Esophagus muscularis mucosa (tissue), 4 donors: ENCODE measurements at regions of chr14 and their contacts with region 1.

Region 1: GRCh38 chr14:37874429-37875191 is 279.2 kb downstream of the TTC6 start:
- DNase-seq: peak; percentile 95
- H3K4me3 ChIP-seq: no peak overlapping the region
- H3K27ac ChIP-seq: no peak overlapping the region
- H3K4me1 ChIP-seq: peaks cover 0 to 6% (median 3%) of the 10 kb centered on the region in 4 donors
- H3K27me3 ChIP-seq: no peaks in the 10 kb centered on the region
- CTCF ChIP-seq: peak; percentile 69 to 88 (median 86)
- EP300 ChIP-seq: no peak
- POLR2A ChIP-seq: no peak

Region 2: GRCh38 chr14:37246427-37246914 is 628.1 kb before region 1 on chr14:
- intact Hi-C with region 1: loop called (anchors 5 kb)
- DNase-seq: no peak
- H3K4me3 ChIP-seq: no peak overlapping the region
- H3K27ac ChIP-seq: no peak overlapping the region
- H3K4me1 ChIP-seq: no peaks in the 10 kb centered on the region
- H3K27me3 ChIP-seq: no peaks in the 10 kb centered on the region
- CTCF ChIP-seq: peak; percentile 64 to 84 (median 74)
- EP300 ChIP-seq: no peak
- POLR2A ChIP-seq: no peak

Region 3: DNA sequence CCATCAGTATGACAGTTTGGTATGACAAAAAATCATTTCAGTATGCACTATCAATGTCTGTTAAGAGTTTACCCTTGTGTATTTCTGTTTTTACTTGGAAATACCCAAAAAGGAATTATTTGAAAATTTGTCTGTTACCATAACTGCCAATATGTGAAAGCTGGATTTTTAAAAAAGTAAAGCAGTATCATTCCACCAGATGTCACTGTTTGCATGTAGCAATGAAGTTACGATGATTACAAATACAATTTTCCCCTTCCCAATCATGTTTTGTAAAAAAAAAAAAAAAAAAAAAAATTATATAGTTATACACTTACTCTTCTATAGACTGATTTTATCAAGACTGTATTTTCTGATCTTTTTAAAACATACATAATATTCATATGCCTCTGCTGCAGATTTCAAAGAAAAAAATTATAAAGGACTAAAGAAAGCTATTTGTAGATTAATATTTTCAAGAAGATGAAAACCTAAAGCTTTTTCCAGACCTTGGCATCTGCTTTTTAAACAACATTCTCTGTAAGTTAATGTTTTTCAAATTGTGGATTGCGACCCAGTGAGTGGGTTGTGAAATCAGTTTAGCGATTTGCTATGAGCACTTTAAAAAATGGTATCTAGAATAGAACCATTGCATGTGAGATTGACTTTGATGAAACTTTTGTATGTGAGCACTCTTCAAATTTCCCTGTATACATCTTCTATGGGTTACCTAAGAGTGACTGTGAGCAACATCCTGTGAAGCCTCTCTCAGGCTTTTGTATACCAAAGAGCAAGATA is 165.0 kb before region 1 on chr14:
- intact Hi-C with region 1: loop called (anchors 2 kb)
- DNase-seq: no peak
- H3K4me3 ChIP-seq: no peak overlapping the region
- H3K27ac ChIP-seq: no peak overlapping the region
- H3K4me1 ChIP-seq: no peaks in the 10 kb centered on the region
- H3K27me3 ChIP-seq: no peaks in the 10 kb centered on the region
- CTCF ChIP-seq: peak in 2 of 3 experiments; percentile 27 to 43
- EP300 ChIP-seq: no peak
- POLR2A ChIP-seq: no peak